Calu3 (cell line): ENCODE measurements at regions of chr19 and their contacts with region 1.

Region 1: DNA sequence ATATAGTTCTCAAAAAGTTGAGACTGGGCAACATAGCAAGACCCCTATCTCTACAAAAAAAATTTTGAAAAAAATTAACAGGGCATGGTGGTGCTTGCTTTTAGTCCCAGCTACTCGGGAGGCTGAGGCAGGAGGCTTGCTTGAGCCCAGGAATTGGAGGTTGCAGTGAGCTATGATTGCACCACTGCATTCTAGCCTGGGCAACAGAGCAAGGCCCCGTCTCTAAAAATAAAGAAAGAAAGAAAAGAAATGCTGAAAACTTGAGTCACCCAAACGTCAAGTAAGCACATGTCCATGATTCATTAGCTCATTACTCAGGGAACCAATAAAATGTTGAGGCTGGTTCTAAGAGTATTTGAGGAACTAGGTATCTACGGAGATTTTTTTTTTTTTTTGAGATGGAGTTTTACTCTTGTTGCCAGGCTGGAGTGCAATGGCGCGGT is 33.9 kb upstream of the SEMA6B start:
- DNase-seq: no peak
- H3K4me3 Mint-ChIP-seq: no peak overlapping the region
- H3K27ac Mint-ChIP-seq: no peak overlapping the region
- H3K4me1 Mint-ChIP-seq: peaks cover 7% of the 10 kb centered on the region
- H3K27me3 Mint-ChIP-seq: peaks cover 56% of the 10 kb centered on the region
- CTCF ChIP-seq: no peak

Region 2: DNA sequence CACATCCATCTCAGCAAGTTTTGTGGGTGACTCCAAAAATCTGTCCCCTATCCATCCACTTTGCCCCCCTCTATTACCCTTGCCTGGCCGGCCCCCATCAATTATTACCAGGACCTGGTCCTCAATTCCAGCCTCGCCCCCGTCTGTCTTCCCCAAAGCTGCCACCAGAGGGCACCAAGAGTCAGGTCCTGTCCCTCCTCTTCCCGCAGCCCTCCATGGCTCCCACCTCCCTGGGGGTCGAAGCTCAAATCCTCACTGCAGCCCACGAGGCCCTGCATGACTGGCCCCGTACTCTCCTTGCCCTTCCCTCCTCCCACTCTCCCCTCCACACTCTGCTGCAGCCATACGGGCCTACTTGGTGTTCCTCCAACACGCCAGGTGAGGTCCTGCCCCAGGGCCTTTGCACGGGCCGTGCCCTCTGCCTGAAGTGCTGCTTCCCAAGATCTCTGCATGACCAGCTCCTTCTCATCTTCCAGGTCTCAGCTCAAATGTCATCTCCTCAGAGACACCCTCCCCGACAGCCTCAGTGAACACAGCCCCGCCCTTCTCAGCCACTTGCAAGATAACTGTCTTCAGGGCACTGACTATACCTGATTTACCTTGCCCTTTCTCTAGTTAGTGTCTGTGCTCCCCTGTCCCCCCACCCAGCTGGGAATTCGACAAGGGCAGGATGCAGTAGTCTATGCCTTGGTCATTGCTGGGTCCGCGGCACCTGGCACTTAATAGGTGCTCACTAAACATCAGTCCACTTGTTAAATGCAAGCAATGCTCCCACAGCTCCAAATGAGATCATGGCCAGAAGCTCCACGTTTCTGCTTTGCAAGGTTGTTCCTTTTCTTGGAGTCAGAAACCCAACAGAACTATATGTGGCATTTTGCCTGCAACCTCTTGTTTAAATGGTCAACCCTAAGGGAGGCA is 17.2 kb before region 1 on chr19:
- CTCF ChIA-PET with region 1: interaction called, 11 read pairs
- intact Hi-C with region 1: no loop called
- DNase-seq: peak; percentile 72
- H3K4me3 Mint-ChIP-seq: no peak overlapping the region
- H3K27ac Mint-ChIP-seq: peak overlapping the region; percentile 25
- H3K4me1 Mint-ChIP-seq: peaks cover 34% of the 10 kb centered on the region
- H3K27me3 Mint-ChIP-seq: peaks cover 22% of the 10 kb centered on the region
- CTCF ChIP-seq: peak; percentile 39

Region 3: GRCh38 chr19:4633140-4633967 is 39.9 kb after region 1 on chr19:
- CTCF ChIA-PET with region 1: interaction called, 11 read pairs
- intact Hi-C with region 1: no loop called
- DNase-seq: peak; percentile 68
- H3K4me3 Mint-ChIP-seq: no peak overlapping the region
- H3K27ac Mint-ChIP-seq: peak overlapping the region; percentile 33
- H3K4me1 Mint-ChIP-seq: peaks cover 9% of the 10 kb centered on the region
- H3K27me3 Mint-ChIP-seq: no peaks in the 10 kb centered on the region
- CTCF ChIP-seq: peak; percentile 67